Thyroid gland (tissue), 4 donors: ENCODE measurements at regions of chr2 and their contacts with region 1.

Region 1: DNA sequence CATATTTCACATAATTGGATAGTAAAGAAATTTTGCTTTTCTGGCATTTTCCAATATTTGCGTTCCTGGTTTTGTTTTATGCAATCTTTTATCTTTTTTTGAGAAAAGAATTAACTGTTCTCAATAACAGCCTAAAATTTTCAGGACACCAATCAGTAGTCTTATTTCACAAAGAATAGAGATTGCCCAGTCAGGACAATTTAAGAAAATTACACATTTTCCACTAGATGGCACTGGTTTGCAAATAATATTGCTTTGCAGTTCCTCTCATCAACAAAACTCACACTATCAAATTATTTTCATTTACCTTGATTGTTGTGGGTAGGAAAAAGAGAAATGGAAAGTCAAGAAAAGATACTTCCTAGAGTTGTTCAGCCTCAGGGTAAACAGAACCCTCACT is 2.4 kb upstream of the RBM45 start:
- DNase-seq: no peak
- H3K4me3 ChIP-seq: no peak overlapping the region
- H3K27ac ChIP-seq: no peak overlapping the region
- H3K4me1 ChIP-seq: peaks cover 10 to 17% of the 10 kb centered on the region in 2 donors
- H3K27me3 ChIP-seq: no peaks in the 10 kb centered on the region
- CTCF ChIP-seq: peak; percentile 9 to 62 (median 48)
- POLR2A ChIP-seq: no peak

Region 2: GRCh38 chr2:177983183-177983788 is 126.5 kb before region 1 on chr2:
- intact Hi-C with region 1: loop called (anchors 10 kb)
- DNase-seq: peak; percentile 57 to 69
- H3K4me3 ChIP-seq: no peak overlapping the region
- H3K27ac ChIP-seq: no peak overlapping the region
- H3K4me1 ChIP-seq: no peaks in the 10 kb centered on the region
- H3K27me3 ChIP-seq: no peaks in the 10 kb centered on the region
- CTCF ChIP-seq: peak in 5 of 6 experiments; percentile 62 to 87 (median 76)
- POLR2A ChIP-seq: no peak